ENCODE measurements at regions of chr3 and their contacts with region 1.

Region 1: DNA sequence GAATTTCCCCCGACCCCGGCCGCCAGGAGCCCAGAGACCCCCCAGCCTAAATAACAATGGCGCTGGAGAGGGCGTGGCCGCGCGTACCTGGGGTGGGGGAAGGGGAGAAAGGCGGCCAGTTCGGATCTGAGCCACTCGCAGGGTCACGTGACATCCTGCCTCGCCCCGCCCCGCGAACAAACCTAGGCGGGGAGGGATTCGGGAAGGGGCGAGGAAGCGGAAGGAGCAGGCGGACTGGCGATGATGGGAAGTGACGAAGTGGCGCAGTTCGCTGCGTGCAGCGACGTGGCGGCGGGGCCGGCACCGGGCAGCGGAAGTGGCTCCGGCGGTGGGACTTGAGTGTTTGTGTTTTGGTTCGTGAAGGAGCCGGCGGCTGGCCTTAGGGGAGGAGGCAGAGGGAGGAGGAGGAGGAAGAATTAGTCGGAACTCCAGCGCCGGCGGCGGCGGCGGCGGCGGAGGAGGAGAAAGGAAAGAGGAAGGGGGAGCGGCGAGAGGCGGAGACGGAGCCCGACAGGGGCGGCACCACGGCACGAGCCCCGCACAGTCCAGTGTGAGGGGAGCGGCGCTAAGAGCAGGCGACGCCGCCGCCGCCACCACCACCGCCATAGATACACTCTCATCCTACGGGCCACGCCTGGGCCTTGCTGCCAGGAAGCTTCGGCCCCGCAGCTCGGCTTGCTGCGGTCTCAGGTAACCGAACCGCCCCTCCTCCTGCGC is at the start of gene RAB5A:
- DNase-seq: peak; percentile 98
- H3K4me3 ChIP-seq: peak within 1 kb of the TSS; percentile 82 to 93
- H3K27ac ChIP-seq: peak within 1 kb of the TSS; percentile 95 to 99
- H3K4me1 ChIP-seq: no peaks in the 10 kb centered on the region
- H3K27me3 ChIP-seq: no peaks in the 10 kb centered on the region
- CTCF ChIP-seq: peak in 2 of 4 experiments; percentile 12 to 29
- POLR2A ChIP-seq: peak; percentile 82
- total RNA-seq, gene RAB5A: 55.4 to 61.5 TPM

Region 2: GRCh38 chr3:19735111-19735510 is 211.9 kb before region 1 on chr3:
- intact Hi-C with region 1: no loop called
- DNase-seq: no peak
- H3K4me3 ChIP-seq: no peak overlapping the region
- H3K27ac ChIP-seq: no peak overlapping the region
- H3K4me1 ChIP-seq: no peaks in the 10 kb centered on the region
- H3K27me3 ChIP-seq: no peaks in the 10 kb centered on the region
- CTCF ChIP-seq: no peak
- POLR2A ChIP-seq: no peak

Region 3: DNA sequence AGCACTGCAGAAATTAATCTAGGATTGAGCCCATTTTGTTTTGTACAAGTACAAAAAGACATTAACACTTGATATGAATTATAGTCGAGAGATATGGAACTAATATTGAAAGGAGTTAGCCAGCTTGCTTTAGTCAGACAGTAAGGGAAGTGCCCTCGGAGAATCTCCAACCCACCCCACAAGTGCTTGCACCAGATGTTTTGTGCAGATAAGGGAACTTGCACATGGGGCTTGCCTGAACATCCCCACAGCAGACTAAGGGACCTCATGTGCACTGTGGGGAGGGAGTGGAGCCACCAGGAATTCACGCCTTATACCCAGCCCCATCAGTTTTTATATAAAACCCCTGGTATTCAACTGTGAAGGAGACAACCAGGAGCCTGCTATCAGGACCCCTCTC is 135.3 kb before region 1 on chr3:
- intact Hi-C with region 1: no loop called
- DNase-seq: no peak
- H3K4me3 ChIP-seq: no peak overlapping the region
- H3K27ac ChIP-seq: no peak overlapping the region
- H3K4me1 ChIP-seq: no peaks in the 10 kb centered on the region
- H3K27me3 ChIP-seq: no peaks in the 10 kb centered on the region
- CTCF ChIP-seq: no peak
- POLR2A ChIP-seq: no peak

Region 4: GRCh38 chr3:20125897-20126296 is 178.9 kb after region 1 on chr3:
- intact Hi-C with region 1: no loop called
- DNase-seq: no peak
- H3K4me3 ChIP-seq: no peak overlapping the region
- H3K27ac ChIP-seq: no peak overlapping the region
- H3K4me1 ChIP-seq: no peaks in the 10 kb centered on the region
- H3K27me3 ChIP-seq: no peaks in the 10 kb centered on the region
- CTCF ChIP-seq: no peak
- POLR2A ChIP-seq: no peak

Region 5: DNA sequence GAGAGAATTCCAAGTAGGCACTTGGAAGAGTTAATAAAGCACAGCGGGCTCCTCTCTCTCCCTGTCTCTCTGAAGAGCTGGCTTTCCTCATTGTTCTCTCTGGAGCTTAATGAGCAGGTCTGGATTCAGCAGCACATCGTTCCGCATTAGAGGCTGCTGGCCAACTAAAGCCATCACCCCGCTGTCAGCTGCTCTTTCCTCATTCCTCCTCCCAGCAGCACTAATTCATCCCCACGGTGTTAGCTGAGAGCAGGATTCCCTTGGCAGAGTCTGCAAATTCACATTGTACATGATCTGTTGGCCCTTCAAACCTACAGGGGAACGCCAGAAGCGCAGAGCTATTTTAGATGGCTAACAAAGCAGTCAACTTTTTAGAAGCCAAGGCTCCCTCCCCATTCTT is 194.9 kb after region 1 on chr3:
- intact Hi-C with region 1: loop called (anchors 5 kb)
- DNase-seq: peak; percentile 34
- H3K4me3 ChIP-seq: no peak overlapping the region
- H3K27ac ChIP-seq: peak overlapping the region in 1 of 2 donors; percentile 36
- H3K4me1 ChIP-seq: no peaks in the 10 kb centered on the region
- H3K27me3 ChIP-seq: no peaks in the 10 kb centered on the region
- CTCF ChIP-seq: no peak
- POLR2A ChIP-seq: no peak

Region 6: GRCh38 chr3:20185701-20186598 is 239.0 kb after region 1 on chr3 and contains the start of gene SGO1:
- intact Hi-C with region 1: loop called (anchors 2 kb)
- DNase-seq: peak; percentile 99
- H3K4me3 ChIP-seq: peak within 1 kb of the TSS; percentile 57 to 58
- H3K27ac ChIP-seq: peak within 1 kb of the TSS; percentile 88 to 95
- H3K4me1 ChIP-seq: no peaks in the 10 kb centered on the region
- H3K27me3 ChIP-seq: no peaks in the 10 kb centered on the region
- CTCF ChIP-seq: peak in 2 of 4 experiments; percentile 29 to 34
- POLR2A ChIP-seq: peak; percentile 84
- total RNA-seq, gene SGO1: 0.41 to 7.3 TPM